ENCODE measurements at regions of chr5 and their contacts with region 1.

Region 1: GRCh38 chr5:176530983-176531821 is 6.0 kb downstream of the RNF44 start:
- DNase-seq: peak in 1 of 9 donors; percentile 23
- ATAC-seq: no peak
- H3K4me3 ChIP-seq: peak overlapping the region; percentile 20
- H3K4me3 Mint-ChIP-seq: peak overlapping the region; percentile 71 to 99 (median 82)
- H3K27ac ChIP-seq: peak overlapping the region; percentile 96
- H3K27ac Mint-ChIP-seq: peak overlapping the region; percentile 79 to 97 (median 89)
- H3K4me1 ChIP-seq: peaks cover 55 to 59% of the 10 kb centered on the region in 2 donors
- H3K4me1 Mint-ChIP-seq: peaks cover 32 to 55% (median 45%) of the 10 kb centered on the region in 7 donors
- H3K27me3 ChIP-seq: no peaks in the 10 kb centered on the region
- H3K27me3 Mint-ChIP-seq: no peaks in the 10 kb centered on the region

Region 2: GRCh38 chr5:175671013-175671412 is 860.2 kb before region 1 on chr5:
- CTCF ChIA-PET with region 1: no interaction called
- POLR2A ChIA-PET with region 1: no interaction called
- intact Hi-C with region 1: no loop called
- DNase-seq: no peak
- ATAC-seq: peak; percentile 66
- H3K4me3 ChIP-seq: no peak overlapping the region
- H3K4me3 Mint-ChIP-seq: peak overlapping the region in 3 of 10 donors; percentile 7 to 14 (median 11)
- H3K27ac ChIP-seq: no peak overlapping the region
- H3K27ac Mint-ChIP-seq: peak overlapping the region in 8 of 9 donors; percentile 3 to 82 (median 68)
- H3K4me1 ChIP-seq: peaks cover 0 to 23% of the 10 kb centered on the region in 2 donors
- H3K4me1 Mint-ChIP-seq: peaks cover 54 to 93% (median 78%) of the 10 kb centered on the region in 7 donors
- H3K27me3 ChIP-seq: no peaks in the 10 kb centered on the region
- H3K27me3 Mint-ChIP-seq: no peaks in the 10 kb centered on the region

Region 3: DNA sequence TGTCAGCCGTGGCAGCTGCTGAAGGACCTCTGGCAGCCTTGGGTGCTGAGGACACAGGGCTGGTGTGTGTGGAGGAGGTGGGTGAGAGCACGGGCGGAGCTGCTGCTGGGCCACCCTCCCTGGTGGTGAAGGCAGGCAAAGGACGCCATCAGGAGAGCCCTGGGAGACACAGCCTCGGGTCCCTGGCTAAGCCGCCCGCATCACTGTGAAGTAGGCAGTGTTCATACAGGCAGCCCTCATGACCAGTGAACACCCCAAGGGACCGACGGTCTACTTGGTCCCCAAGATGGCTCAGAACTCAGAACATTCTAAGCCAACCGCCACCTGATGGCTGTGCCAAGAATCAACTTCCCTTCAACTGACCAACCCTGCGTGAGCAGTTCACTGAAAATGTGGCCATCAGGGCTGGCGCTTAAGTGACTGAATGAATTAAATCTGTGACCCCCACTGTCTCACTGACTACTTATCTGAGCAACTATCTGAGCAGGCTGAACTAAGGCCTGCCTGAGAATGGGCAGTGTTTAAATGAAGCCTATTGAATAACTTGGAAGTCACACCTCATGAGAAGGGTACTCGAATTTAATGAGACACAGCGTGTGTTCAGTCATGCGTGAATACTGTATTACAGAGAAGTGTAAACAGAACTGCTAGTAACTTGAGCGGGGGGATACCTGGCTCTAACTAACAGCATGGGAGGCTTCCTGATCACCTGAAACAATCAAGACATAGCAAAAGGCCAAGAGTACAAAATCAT is 347.7 kb before region 1 on chr5:
- CTCF ChIA-PET with region 1: no interaction called
- POLR2A ChIA-PET with region 1: no interaction called
- intact Hi-C with region 1: no loop called
- DNase-seq: no peak
- ATAC-seq: no peak
- H3K4me3 ChIP-seq: no peak overlapping the region
- H3K4me3 Mint-ChIP-seq: no peak overlapping the region
- H3K27ac ChIP-seq: no peak overlapping the region
- H3K27ac Mint-ChIP-seq: no peak overlapping the region
- H3K4me1 ChIP-seq: no peaks in the 10 kb centered on the region
- H3K4me1 Mint-ChIP-seq: peaks cover 0 to 5% (median 0%) of the 10 kb centered on the region in 7 donors
- H3K27me3 ChIP-seq: peaks cover 0 to 2% of the 10 kb centered on the region in 2 donors
- H3K27me3 Mint-ChIP-seq: peaks cover 2 to 39% (median 21%) of the 10 kb centered on the region in 5 donors

Region 4: GRCh38 chr5:176519810-176520720 is 11.1 kb before region 1 on chr5:
- CTCF ChIA-PET with region 1: interaction called, 3 read pairs
- POLR2A ChIA-PET with region 1: interaction called, 251 read pairs
- intact Hi-C with region 1: no loop called
- DNase-seq: no peak
- ATAC-seq: no peak
- H3K4me3 ChIP-seq: no peak overlapping the region
- H3K4me3 Mint-ChIP-seq: peak overlapping the region in 1 of 10 donors; percentile 56
- H3K27ac ChIP-seq: no peak overlapping the region
- H3K27ac Mint-ChIP-seq: peak overlapping the region in 3 of 9 donors; percentile 11 to 62 (median 17)
- H3K4me1 ChIP-seq: peaks cover 0 to 9% of the 10 kb centered on the region in 2 donors
- H3K4me1 Mint-ChIP-seq: peaks cover 13 to 44% (median 32%) of the 10 kb centered on the region in 7 donors
- H3K27me3 ChIP-seq: no peaks in the 10 kb centered on the region
- H3K27me3 Mint-ChIP-seq: no peaks in the 10 kb centered on the region

Region 5: GRCh38 chr5:176553262-176554077 is 22.3 kb after region 1 on chr5:
- CTCF ChIA-PET with region 1: interaction called, 3 read pairs
- POLR2A ChIA-PET with region 1: interaction called, 118 read pairs
- intact Hi-C with region 1: no loop called
- DNase-seq: no peak
- ATAC-seq: no peak
- H3K4me3 ChIP-seq: no peak overlapping the region
- H3K4me3 Mint-ChIP-seq: peak overlapping the region in 2 of 10 donors; percentile 2 to 6
- H3K27ac ChIP-seq: no peak overlapping the region
- H3K27ac Mint-ChIP-seq: peak overlapping the region; percentile 8 to 87 (median 63)
- H3K4me1 ChIP-seq: peaks cover 6 to 37% of the 10 kb centered on the region in 2 donors
- H3K4me1 Mint-ChIP-seq: peaks cover 40 to 75% (median 58%) of the 10 kb centered on the region in 7 donors
- H3K27me3 ChIP-seq: no peaks in the 10 kb centered on the region
- H3K27me3 Mint-ChIP-seq: no peaks in the 10 kb centered on the region

Measured in naive thymus-derived CD4-positive, alpha-beta T cell (primary cell).